Left ventricle myocardium superior (tissue), 1 donor: ENCODE measurements at regions of chr2 and their contacts with region 1.

Region 1: DNA sequence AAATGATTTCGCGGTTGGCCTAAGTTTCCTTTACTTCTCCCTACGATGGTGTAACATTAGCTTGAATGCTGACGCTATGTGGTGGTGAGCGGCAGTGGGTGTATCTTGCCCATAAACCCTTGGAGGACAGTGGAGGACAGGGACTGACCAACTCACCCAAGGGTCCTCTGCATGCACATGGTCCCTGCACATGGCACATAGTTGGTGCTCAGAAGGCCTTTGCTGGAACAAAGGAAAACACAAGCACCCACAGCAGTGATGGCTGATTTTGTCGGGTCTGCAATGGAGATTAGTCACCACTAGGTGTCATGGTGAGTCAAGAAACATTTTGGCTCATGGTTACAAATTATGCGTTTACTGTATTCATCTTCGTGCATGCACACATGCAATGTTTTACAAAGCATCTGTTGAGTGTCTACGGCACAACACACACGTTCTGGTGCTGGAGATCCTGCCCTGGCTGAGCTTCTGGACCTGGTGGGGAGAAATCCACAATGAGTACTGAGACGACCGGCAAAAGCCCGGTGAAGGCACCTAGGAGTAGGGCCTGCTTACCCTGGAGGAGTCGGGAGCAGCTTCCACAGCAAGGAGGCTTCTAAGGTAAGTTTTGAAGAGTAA is 44.0 kb downstream of the PDCL3 start:
- DNase-seq: no peak
- ATAC-seq: peak; percentile 8

Region 2: GRCh38 chr2:100482741-100483140 is 124.1 kb before region 1 on chr2:
- intact Hi-C with region 1: no loop called
- DNase-seq: no peak
- ATAC-seq: no peak

Region 3: DNA sequence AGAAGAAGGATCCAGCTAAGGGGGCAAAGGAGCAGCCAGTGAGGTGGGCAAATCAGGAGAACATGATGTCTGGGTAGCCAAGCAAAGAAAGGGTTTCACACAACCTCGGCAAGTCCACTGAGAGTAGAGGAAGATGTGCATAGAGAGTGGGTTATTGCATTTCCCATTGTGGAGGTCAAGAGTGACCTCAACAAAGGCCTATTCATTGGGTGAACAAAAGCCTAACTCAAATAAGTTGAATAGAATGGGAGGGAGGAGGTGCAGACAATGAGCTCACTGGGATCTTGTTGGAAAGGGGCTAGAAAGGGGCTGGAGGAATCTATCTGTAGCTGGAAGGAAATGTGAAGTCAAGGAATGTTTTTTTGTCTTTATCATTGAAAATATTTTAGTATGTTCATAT is 58.1 kb before region 1 on chr2:
- intact Hi-C with region 1: no loop called
- DNase-seq: no peak
- ATAC-seq: no peak

Region 4: DNA sequence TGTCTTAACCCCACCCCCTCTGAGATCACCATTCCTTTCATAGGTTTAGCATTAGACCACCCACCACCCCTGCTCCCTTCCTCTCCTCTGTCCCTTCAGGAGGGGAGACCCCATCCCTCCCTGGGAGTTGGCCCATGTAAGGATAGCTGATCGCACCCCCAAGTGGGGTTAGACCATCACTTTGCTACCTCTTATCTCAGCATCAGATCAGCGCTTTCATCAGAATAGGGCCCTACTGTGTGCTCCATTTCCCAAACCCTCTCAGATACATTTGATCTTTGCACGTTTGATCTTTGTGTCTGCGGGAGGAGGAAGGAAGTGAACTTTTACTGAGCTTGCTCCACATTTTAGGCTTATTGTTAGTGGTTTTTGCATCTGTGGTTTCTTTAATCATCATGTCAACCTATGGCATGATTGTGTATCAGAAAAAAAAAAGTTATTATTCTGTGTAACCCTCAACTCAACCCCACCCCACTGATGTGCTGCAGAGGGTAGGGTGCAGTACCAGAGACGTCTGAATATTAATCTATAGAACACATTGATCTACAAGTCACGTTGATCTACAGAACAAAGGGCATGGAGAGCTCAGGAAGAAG is 37.2 kb after region 1 on chr2:
- intact Hi-C with region 1: no loop called
- DNase-seq: no peak
- ATAC-seq: no peak

Region 5: DNA sequence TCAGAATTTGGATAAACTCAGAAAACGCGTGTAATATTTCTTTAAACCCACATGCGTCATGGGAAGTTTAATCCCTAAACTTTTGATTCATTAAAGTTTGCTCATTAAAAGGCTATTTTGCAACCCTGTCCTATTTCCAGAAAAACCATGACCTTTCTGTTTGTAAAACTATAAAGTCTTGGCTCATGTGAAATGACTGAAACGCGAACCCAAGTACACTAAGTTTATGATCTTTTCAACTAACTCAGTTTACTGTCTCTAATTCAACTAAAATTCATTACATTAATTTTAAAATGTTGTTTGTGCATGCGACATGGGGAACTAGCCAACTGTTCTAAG is 391.4 kb after region 1 on chr2:
- intact Hi-C with region 1: loop called (anchors 5 kb)
- DNase-seq: no peak
- ATAC-seq: no peak